GM10248 (cell line): ENCODE measurements at regions of chr7 and their contacts with region 1.

Region 1: GRCh38 chr7:80346704-80347103 is 165.2 kb downstream of the GNAT3 start:
- DNase-seq: no peak
- CTCF ChIP-seq: no peak

Region 2: DNA sequence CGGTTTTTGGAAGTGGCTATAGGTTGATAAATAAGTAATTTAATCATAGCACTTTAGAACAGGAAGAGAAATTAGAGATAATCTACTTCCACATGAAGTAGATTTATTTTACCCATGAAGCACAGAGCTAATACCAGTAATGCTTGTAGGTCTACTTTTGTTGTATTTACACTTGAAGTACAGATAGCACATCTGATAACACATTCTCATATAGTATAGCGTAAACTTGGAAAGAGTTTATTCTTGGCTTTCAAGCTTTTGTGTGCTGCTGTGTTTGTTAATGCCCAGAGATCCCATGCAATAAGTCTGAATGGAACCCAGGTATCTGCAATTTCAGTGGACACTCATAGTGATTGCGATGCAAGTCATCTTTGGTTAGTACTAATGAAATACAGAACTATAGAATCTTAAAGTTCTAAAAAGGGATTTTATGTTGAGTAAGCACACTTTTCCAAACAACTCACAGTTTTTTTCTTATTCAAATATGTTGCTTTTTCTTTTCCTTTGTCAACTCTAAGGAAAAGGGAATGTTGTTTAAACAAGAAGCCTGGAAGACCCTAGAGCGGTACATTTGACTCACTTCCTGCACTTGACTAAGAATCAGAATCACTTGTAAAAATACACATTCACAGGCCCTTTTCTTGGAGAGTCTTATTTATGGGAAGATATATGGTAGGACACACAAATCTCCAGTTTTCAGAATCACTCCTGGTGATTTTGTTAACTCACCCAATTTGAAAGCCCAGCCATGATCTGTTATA is 106.3 kb before region 1 on chr7:
- CTCF ChIA-PET with region 1: no interaction called
- POLR2A ChIA-PET with region 1: no interaction called
- DNase-seq: no peak
- CTCF ChIP-seq: no peak

Region 3: DNA sequence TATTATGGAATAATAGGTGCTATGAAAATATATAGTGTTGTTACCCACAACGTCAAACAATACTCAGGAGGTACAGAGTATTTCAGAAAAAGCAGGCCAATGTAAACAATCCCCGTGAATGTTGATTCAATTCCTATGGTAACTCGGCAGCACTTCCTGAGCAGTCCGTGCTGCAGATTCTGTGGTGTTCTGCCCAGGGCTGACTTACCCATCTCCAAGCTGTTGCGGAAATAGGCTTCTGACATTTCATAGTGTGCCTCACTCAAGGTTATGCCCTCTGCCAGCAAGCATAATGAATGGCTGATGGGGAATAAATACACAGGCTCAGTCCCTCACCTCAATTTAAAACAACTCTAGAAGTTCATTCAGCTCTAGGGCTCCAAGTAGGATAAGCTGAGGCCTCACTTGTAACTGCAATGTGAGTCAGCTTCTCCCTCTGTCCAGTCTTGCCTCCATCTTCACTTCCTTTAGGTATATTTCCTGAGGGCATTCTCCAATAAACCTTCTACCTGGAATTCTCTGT is 34.5 kb before region 1 on chr7:
- CTCF ChIA-PET with region 1: no interaction called
- POLR2A ChIA-PET with region 1: no interaction called
- DNase-seq: no peak
- CTCF ChIP-seq: no peak

Region 4: DNA sequence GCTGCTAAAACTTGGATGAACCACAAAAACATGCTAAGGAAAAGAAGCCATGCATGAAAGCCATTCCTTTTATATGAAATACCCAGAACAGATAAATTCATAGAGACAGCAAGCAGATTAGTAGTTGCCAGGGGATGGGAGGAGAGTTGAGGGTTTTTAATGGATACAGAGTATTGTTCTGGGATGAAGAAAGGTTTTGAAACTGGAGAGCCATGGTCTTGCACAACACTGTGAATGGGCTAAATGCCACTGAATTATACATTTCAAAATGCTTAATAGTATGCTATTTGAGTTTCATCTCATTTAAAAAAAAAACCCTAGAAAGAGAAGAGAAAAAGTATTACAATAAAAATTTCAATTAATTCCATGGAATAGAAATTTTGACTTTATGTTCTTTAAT is 10.8 kb after region 1 on chr7:
- CTCF ChIA-PET with region 1: interaction called, 11 read pairs
- POLR2A ChIA-PET with region 1: no interaction called
- DNase-seq: no peak
- CTCF ChIP-seq: no peak